Heart right ventricle (tissue), 16 donors: ENCODE measurements at regions of chr1 and their contacts with region 1.

Region 1: GRCh38 chr1:21524686-21525339 is 15.6 kb downstream of the ALPL start:
- DNase-seq: no peak
- ATAC-seq: peak in 4 of 8 donors; percentile 25 to 57 (median 48)
- H3K4me3 ChIP-seq: no peak overlapping the region
- H3K27ac ChIP-seq: peak overlapping the region in 7 of 10 donors; percentile 20 to 67 (median 57)
- H3K4me1 ChIP-seq: peaks cover 0 to 14% (median 12%) of the 10 kb centered on the region in 9 donors
- H3K27me3 ChIP-seq: peaks cover 0 to 4% (median 0%) of the 10 kb centered on the region in 7 donors
- CTCF ChIP-seq: no peak

Region 2: GRCh38 chr1:21564521-21565095 is 39.8 kb after region 1 on chr1:
- intact Hi-C with region 1: loop called in 1 of 10 experiments (anchors 5 kb)
- DNase-seq: no peak
- ATAC-seq: peak in 1 of 8 donors; percentile 44
- H3K4me3 ChIP-seq: no peak overlapping the region
- H3K27ac ChIP-seq: no peak overlapping the region
- H3K4me1 ChIP-seq: peaks cover 0 to 5% (median 0%) of the 10 kb centered on the region in 9 donors
- H3K27me3 ChIP-seq: no peaks in the 10 kb centered on the region
- CTCF ChIP-seq: no peak